ENCODE measurements at regions of chr15 and their contacts with region 1.

Region 1: DNA sequence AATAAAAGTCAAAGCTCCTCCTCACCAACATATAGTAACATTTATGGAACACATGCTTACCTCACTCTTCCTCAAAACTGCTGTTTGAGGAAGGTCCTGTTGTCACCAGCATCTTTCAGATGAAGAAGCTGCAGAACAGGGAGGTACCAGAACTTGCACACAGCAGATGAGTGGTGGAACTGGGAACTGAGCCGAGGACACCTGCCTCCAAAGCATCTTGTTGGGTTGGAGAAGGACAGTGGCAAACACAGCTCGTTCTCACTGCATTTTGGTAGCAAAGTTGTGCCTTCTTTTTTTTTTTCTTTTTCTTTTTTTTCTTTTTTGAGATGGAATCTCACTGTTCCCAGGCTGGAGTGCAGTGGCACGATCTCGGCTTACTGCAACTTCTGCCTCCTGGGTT is 76.0 kb downstream of the CEMIP start:
- DNase-seq: no peak
- ATAC-seq: no peak
- H3K4me3 Mint-ChIP-seq: no peak overlapping the region
- H3K27ac Mint-ChIP-seq: no peak overlapping the region
- H3K4me1 Mint-ChIP-seq: peaks cover 18% of the 10 kb centered on the region
- H3K27me3 Mint-ChIP-seq: peaks cover 5% of the 10 kb centered on the region

Region 2: DNA sequence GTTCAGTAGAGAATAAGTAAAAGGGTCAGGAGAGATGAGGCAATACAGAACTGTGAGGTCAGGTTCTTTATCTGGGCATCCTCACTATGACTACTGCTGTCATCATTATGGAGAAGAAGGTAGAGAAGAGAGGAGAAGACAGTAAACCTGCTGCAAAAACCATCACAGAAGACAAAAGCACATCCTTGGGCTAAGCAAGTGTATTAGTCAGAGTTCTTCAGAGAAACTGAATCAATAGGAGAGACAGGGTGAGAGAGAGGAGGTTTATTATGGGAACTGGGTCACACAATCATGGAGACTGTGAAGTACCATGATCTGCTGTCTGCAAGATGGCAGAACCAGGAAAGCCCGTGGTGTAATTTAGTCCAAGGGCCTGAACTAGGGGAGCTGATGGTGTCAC is 169.6 kb before region 1 on chr15:
- CTCF ChIA-PET with region 1: no interaction called
- POLR2A ChIA-PET with region 1: interaction called, 12 read pairs
- intact Hi-C with region 1: no loop called
- DNase-seq: no peak
- ATAC-seq: no peak
- H3K4me3 Mint-ChIP-seq: no peak overlapping the region
- H3K27ac Mint-ChIP-seq: no peak overlapping the region
- H3K4me1 Mint-ChIP-seq: no peaks in the 10 kb centered on the region
- H3K27me3 Mint-ChIP-seq: peaks cover 27% of the 10 kb centered on the region

Region 3: GRCh38 chr15:80710635-80711554 is 144.3 kb before region 1 on chr15:
- CTCF ChIA-PET with region 1: no interaction called
- POLR2A ChIA-PET with region 1: no interaction called
- intact Hi-C with region 1: no loop called
- DNase-seq: peak; percentile 78
- ATAC-seq: peak; percentile 97
- H3K4me3 Mint-ChIP-seq: no peak overlapping the region
- H3K27ac Mint-ChIP-seq: no peak overlapping the region
- H3K4me1 Mint-ChIP-seq: peaks cover 20% of the 10 kb centered on the region
- H3K27me3 Mint-ChIP-seq: no peaks in the 10 kb centered on the region

Region 4: DNA sequence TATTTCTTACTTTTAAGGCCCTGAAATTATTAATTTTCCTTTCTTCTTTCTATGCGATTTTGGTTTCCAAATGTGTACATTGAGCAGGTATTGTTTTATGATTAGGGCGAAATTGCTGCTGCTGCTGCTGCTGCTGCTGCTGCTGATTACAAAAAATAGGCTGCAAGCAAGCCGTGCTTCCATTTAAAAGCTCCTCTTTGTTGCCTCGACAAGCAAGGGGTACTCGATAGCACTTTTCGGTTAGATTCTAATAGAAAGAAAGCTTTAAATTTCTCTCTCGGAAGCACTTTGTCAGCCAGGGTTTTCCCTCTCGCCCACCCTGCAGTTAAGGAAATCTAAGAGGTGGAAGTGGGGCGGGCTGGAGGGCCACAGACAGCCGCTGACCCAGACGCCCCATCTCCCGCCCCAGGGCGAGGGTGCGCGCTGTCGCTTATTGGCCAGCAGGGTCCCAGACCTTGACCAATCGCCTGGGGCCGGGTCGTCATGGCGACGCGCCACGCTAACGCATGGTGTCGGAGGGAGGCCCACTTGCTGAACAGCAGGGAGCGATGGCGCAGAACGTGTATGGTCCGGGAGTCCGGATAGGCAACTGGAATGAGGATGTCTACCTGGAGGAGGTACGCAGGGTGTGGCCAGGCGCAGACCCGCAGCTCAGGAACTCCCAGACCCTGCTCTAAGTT is 278.7 kb after region 1 on chr15 and contains the start of gene CFAP161:
- CTCF ChIA-PET with region 1: no interaction called
- POLR2A ChIA-PET with region 1: no interaction called
- intact Hi-C with region 1: no loop called
- DNase-seq: peak; percentile 70
- ATAC-seq: peak; percentile 86
- H3K4me3 Mint-ChIP-seq: peak within 1 kb of the TSS; percentile 18
- H3K27ac Mint-ChIP-seq: no peak within 1 kb of the TSS
- H3K4me1 Mint-ChIP-seq: peaks cover 2% of the 10 kb centered on the region
- H3K27me3 Mint-ChIP-seq: peaks cover 45% of the 10 kb centered on the region
- total RNA-seq, gene CFAP161: not detected